ENCODE measurements at regions of chr1 and their contacts with region 1.

Region 1: GRCh38 chr1:225772323-225772768 is 5.3 kb upstream of the SRP9 start:
- DNase-seq: peak; percentile 98
- H3K4me3 ChIP-seq: no peak overlapping the region
- H3K27ac ChIP-seq: peak overlapping the region; percentile 72 to 78
- H3K4me1 ChIP-seq: peaks cover 19% of the 10 kb centered on the region
- H3K27me3 ChIP-seq: no peaks in the 10 kb centered on the region
- CTCF ChIP-seq: peak; percentile 84 to 97 (median 94)
- POLR2A ChIP-seq: peak; percentile 17

Region 2: DNA sequence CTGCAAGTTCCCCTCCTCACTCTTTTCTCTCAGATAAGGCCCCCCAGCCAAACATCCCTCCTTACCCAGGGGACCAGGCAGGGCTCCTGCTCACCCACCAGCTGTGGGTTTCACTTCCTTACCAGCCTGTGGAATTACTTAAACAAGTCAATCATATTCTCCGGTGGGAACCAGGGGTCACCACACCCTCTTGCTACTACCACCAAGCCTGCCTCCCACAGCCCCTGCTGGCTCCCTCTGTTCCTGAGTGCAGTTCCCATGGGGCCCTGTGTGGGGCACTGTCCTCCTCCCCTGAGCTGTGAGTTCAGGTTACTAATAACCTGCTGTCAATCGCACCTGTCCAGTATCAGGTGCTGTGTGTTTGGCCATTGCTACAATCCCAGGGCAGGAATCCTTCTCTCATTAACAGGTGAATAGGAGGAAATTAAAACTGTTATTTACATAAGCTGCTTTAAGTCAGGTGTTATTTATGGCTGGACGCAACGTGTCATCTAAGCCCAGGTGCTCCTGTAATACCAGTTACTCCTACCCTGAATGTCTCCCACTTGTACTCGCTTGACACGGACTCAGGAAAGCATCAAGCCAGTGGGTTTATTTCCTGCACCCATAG is 291.4 kb before region 1 on chr1:
- intact Hi-C with region 1: loop called (anchors 2 kb)
- DNase-seq: no peak
- H3K4me3 ChIP-seq: no peak overlapping the region
- H3K27ac ChIP-seq: no peak overlapping the region
- H3K4me1 ChIP-seq: no peaks in the 10 kb centered on the region
- H3K27me3 ChIP-seq: no peaks in the 10 kb centered on the region
- CTCF ChIP-seq: peak; percentile 63 to 86 (median 76)
- POLR2A ChIP-seq: no peak

Region 3: GRCh38 chr1:225554216-225554812 is 218.0 kb before region 1 on chr1:
- intact Hi-C with region 1: loop called (anchors 5 kb)
- DNase-seq: no peak
- H3K4me3 ChIP-seq: no peak overlapping the region
- H3K27ac ChIP-seq: no peak overlapping the region
- H3K4me1 ChIP-seq: no peaks in the 10 kb centered on the region
- H3K27me3 ChIP-seq: no peaks in the 10 kb centered on the region
- CTCF ChIP-seq: peak in 3 of 4 experiments; percentile 29 to 60 (median 56)
- POLR2A ChIP-seq: no peak

Region 4: GRCh38 chr1:225652729-225653462 is 119.5 kb before region 1 on chr1 and contains the start of gene ENAH:
- intact Hi-C with region 1: loop called (anchors 5 kb)
- DNase-seq: peak; percentile 78
- H3K4me3 ChIP-seq: peak within 1 kb of the TSS; percentile 95 to 96
- H3K27ac ChIP-seq: peak within 1 kb of the TSS; percentile 96 to 97
- H3K4me1 ChIP-seq: no peaks in the 10 kb centered on the region
- H3K27me3 ChIP-seq: no peaks in the 10 kb centered on the region
- CTCF ChIP-seq: no peak
- POLR2A ChIP-seq: peak; percentile 54
- total RNA-seq, gene ENAH: 36.4 to 93.6 TPM